ENCODE measurements at regions of chr9 and their contacts with region 1.

Region 1: DNA sequence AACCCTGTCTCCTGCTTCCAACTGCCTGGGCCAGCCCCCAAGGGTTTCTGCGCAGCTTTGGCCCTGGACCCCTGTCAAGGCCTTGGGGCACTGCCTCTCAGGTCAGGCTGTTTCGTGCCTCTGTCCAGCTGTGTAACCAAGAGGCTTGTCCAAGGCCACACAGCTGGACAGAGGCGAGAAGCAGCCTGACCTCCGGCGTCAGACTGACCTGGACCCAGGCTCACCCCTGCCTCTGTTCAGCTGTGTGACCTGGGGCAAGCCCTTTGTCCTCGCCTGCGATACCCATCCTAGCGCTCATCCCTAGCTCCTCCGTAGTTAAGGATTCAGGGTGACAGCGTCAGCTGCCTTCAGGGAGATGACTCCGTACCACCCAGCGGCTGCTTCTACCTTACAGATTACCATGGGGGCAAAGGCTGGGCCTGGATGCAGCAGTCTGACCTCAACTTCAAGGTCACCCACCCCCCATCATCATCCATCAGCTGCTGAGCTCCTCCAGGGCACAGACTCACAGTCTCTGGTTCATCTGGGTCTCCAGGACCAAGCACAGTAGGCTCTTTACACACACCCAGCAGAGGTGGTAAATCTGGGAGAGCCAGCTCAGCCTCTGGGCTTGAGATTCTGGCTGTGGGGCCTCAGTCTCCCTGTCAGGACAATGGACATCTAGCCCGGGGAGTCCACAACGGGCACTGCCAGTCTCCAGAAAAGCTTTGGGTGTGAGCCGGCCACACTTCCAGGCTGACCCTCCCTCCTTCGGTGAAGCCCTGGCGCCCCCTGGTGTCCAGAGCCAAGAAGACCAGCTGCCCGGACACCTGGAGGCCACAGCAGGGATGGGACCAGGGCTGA is 7.9 kb downstream of the AK1 start:
- DNase-seq: peak; percentile 72 to 74 (median 73)
- H3K4me3 ChIP-seq: no peak overlapping the region
- H3K27ac ChIP-seq: no peak overlapping the region
- H3K4me1 ChIP-seq: peaks cover 0 to 26% (median 22%) of the 10 kb centered on the region in 4 experiments
- H3K27me3 ChIP-seq: no peaks in the 10 kb centered on the region

Region 2: GRCh38 chr9:127763918-127764384 is 105.6 kb before region 1 on chr9:
- CTCF ChIA-PET with region 1: interaction called, 17 read pairs
- POLR2A ChIA-PET with region 1: no interaction called
- DNase-seq: peak in 2 of 3 donors; percentile 41 to 53
- H3K4me3 ChIP-seq: no peak overlapping the region
- H3K27ac ChIP-seq: no peak overlapping the region
- H3K4me1 ChIP-seq: peaks cover 2 to 52% (median 51%) of the 10 kb centered on the region in 4 experiments
- H3K27me3 ChIP-seq: no peaks in the 10 kb centered on the region

Region 3: GRCh38 chr9:127796225-127796813 is 73.2 kb before region 1 on chr9:
- CTCF ChIA-PET with region 1: interaction called, 11 read pairs
- POLR2A ChIA-PET with region 1: interaction called, 5 read pairs
- DNase-seq: peak in 2 of 3 donors; percentile 45 to 63
- H3K4me3 ChIP-seq: peak overlapping the region in 3 of 7 experiments; percentile 16 to 54 (median 32)
- H3K27ac ChIP-seq: peak overlapping the region in 1 of 2 experiments; percentile 55
- H3K4me1 ChIP-seq: peaks cover 19 to 85% (median 65%) of the 10 kb centered on the region in 4 experiments
- H3K27me3 ChIP-seq: no peaks in the 10 kb centered on the region

Region 4: DNA sequence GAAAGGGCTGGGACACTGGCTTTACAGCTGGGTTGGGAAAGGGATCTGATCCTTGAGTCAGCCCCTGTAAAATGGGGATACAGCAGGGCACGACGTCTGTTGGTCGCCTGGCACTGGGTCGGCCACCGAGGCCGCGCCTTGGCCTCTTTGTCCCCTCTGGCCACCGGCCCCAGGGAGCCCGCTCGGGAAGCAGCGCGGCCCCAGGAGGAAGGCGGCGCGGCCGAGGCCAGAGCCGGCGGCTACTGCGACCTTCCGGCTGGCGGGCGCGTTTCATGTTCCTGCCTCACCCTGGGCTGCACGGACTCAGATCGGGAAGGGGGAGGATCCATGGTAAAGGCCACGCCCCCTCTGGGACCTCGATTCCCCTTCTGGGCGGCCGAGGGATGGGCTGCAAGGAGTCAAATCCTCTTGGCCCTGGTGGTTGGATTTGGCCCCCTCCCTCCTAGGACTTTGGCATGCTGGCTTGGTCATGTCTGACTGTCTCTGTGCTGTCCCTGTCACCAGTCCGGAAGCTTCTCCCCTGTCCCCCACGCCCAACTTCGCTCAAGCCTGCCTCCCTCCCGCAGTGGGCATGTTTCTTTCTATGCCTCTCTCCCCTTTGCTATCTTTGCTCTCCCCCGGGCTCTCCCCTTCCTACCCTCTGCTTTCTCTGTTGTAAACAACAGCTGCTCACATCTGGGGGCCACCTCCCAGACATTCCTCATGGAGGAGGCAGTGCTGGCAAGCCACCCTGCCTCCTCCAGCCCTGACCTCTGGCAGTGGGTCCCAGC is 41.1 kb before region 1 on chr9:
- CTCF ChIA-PET with region 1: interaction called, 26 read pairs
- POLR2A ChIA-PET with region 1: interaction called, 4 read pairs
- DNase-seq: peak in 2 of 3 donors; percentile 46 to 53
- H3K4me3 ChIP-seq: peak overlapping the region in 4 of 7 experiments; percentile 10 to 71 (median 43)
- H3K27ac ChIP-seq: peak overlapping the region in 1 of 2 experiments; percentile 60
- H3K4me1 ChIP-seq: peaks cover 0 to 24% (median 8%) of the 10 kb centered on the region in 4 experiments
- H3K27me3 ChIP-seq: no peaks in the 10 kb centered on the region

Region 5: DNA sequence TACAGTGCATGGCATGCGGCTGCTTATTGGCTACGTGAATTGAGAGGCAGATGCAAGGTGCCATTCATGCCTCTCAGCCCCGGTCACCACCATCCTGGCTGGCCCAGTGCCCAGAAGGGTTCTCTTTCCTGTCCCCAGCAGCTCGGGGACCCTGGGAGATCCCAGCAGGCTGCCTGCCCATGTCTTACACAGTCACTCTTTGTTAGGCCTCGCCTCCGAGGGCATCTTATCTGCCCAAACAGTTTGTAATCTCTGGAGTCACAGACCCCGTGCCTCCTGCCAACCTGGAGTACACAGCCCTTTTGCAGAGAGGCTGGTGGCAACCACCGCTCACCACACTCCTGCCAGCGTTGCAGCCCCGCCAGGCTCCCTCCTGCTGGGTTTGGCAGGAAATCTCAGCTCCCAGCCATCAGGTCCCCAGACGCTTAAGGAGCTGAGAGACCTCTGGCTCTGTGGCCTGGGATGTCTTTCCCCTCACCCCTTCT is 14.9 kb after region 1 on chr9:
- CTCF ChIA-PET with region 1: interaction called, 33 read pairs
- POLR2A ChIA-PET with region 1: no interaction called
- DNase-seq: peak; percentile 94 to 99 (median 98)
- H3K4me3 ChIP-seq: peak overlapping the region in 3 of 7 experiments; percentile 1 to 45 (median 23)
- H3K27ac ChIP-seq: peak overlapping the region in 1 of 2 experiments; percentile 54
- H3K4me1 ChIP-seq: peaks cover 4 to 45% (median 39%) of the 10 kb centered on the region in 4 experiments
- H3K27me3 ChIP-seq: no peaks in the 10 kb centered on the region

Region 6: DNA sequence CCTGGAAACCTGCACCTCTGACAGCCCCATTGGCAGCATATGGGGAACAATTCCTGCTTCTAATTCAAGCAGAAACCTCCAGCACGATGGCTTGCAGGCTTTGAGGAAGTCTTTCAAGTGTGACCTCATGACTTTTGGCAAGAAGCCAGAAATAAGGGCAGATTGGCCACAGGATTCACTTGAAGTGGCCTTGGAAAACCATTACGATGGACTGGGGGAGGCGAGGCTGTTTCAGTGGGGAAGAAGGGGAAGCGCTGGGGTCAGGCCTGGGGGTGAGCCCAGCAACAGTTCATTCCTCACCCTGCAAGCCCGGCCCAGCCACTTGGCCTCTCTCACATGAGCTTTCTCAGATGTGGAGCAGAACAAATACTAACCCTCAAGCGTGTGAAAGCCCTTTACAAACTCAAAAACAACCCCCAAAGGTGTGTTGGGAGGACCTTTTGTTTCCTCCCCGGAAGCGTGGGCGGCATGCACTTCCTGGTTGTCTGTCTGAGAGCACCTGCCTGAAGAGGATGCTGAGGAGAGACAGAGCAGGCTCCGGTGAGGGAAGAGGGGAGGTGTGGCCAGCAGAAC is 138.1 kb after region 1 on chr9:
- CTCF ChIA-PET with region 1: no interaction called
- POLR2A ChIA-PET with region 1: no interaction called
- DNase-seq: peak; percentile 85 to 93 (median 93)
- H3K4me3 ChIP-seq: peak overlapping the region in 1 of 7 experiments; percentile 24
- H3K27ac ChIP-seq: no peak overlapping the region
- H3K4me1 ChIP-seq: peaks cover 5 to 43% (median 32%) of the 10 kb centered on the region in 4 experiments
- H3K27me3 ChIP-seq: no peaks in the 10 kb centered on the region